ENCODE measurements at regions of chr9 and their contacts with region 1.

Region 1: GRCh38 chr9:6827439-6827838 is 69.7 kb downstream of the KDM4C start:
- DNase-seq: peak; percentile 32
- ATAC-seq: peak; percentile 89
- H3K4me3 Mint-ChIP-seq: no peak overlapping the region
- H3K27ac Mint-ChIP-seq: peak overlapping the region; percentile 73; the same call in 1 of the 2 replicates
- H3K4me1 Mint-ChIP-seq: peaks cover 15% of the 10 kb centered on the region
- H3K27me3 Mint-ChIP-seq: no peaks in the 10 kb centered on the region
- CTCF ChIP-seq: peak; percentile 44

Region 2: GRCh38 chr9:6838158-6838557 is 10.7 kb after region 1 on chr9:
- CTCF ChIA-PET with region 1: interaction called, 18 read pairs
- POLR2A ChIA-PET with region 1: interaction called, 4 read pairs
- DNase-seq: no peak
- ATAC-seq: no peak
- H3K4me3 Mint-ChIP-seq: no peak overlapping the region
- H3K27ac Mint-ChIP-seq: 0 out of 2 replicates have a peak overlapping the region, but pooled peaks have one; percentile 28
- H3K4me1 Mint-ChIP-seq: no peaks in the 10 kb centered on the region
- H3K27me3 Mint-ChIP-seq: no peaks in the 10 kb centered on the region
- CTCF ChIP-seq: no peak

Region 3: GRCh38 chr9:6902423-6902822 is 75.0 kb after region 1 on chr9:
- CTCF ChIA-PET with region 1: interaction called, 13 read pairs
- POLR2A ChIA-PET with region 1: no interaction called
- DNase-seq: no peak
- ATAC-seq: no peak
- H3K4me3 Mint-ChIP-seq: no peak overlapping the region
- H3K27ac Mint-ChIP-seq: 0 out of 2 replicates have a peak overlapping the region, but pooled peaks have one; percentile 9
- H3K4me1 Mint-ChIP-seq: peaks cover 35% of the 10 kb centered on the region
- H3K27me3 Mint-ChIP-seq: no peaks in the 10 kb centered on the region
- CTCF ChIP-seq: no peak

Region 4: GRCh38 chr9:6931913-6932312 is 104.5 kb after region 1 on chr9:
- CTCF ChIA-PET with region 1: interaction called, 11 read pairs
- POLR2A ChIA-PET with region 1: no interaction called
- DNase-seq: no peak
- ATAC-seq: no peak
- H3K4me3 Mint-ChIP-seq: no peak overlapping the region
- H3K27ac Mint-ChIP-seq: peak overlapping the region; percentile 14; the same call in 1 of the 2 replicates
- H3K4me1 Mint-ChIP-seq: peaks cover 16% of the 10 kb centered on the region
- H3K27me3 Mint-ChIP-seq: no peaks in the 10 kb centered on the region
- CTCF ChIP-seq: no peak

Region 5: DNA sequence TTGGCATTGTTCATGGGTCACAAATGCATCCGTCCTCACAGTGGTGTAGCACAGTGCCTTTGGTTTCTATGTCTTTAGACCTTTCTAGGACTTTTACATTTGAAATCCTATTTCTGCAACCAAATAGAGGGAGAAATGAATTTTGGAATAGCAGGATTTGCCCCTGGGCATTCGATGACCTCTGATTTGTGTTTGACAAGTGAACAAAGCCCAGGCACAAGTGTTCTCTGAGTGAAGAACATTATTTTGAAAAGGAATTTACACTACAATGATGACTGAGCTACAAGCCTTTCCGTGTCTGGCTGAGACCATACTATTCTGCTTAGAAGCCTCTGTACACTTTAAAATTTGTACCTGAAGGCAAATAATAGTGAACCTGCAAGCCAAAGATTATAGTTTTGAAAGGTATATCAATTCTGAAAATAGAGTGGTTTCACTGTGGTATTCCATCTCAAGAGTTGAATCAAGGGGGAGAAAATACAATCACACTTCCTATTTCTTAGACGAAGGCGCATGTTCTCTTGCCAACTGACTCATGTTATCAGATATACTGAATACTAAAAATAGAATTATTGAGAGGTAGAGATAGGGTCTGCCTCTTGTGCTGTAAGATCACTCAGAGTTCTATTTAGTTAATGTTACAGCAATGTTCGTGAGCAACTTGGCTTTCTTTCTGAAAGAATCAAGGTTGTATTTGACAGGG is 227.9 kb after region 1 on chr9:
- CTCF ChIA-PET with region 1: interaction called, 21 read pairs
- POLR2A ChIA-PET with region 1: no interaction called
- DNase-seq: no peak
- ATAC-seq: no peak
- H3K4me3 Mint-ChIP-seq: no peak overlapping the region
- H3K27ac Mint-ChIP-seq: no peak overlapping the region
- H3K4me1 Mint-ChIP-seq: peaks cover 31% of the 10 kb centered on the region
- H3K27me3 Mint-ChIP-seq: no peaks in the 10 kb centered on the region
- CTCF ChIP-seq: no peak

Measured in WTC11 (cell line).